Endothelial cell of umbilical vein (primary cell): ENCODE measurements at regions of chr2 and their contacts with region 1.

Region 1: DNA sequence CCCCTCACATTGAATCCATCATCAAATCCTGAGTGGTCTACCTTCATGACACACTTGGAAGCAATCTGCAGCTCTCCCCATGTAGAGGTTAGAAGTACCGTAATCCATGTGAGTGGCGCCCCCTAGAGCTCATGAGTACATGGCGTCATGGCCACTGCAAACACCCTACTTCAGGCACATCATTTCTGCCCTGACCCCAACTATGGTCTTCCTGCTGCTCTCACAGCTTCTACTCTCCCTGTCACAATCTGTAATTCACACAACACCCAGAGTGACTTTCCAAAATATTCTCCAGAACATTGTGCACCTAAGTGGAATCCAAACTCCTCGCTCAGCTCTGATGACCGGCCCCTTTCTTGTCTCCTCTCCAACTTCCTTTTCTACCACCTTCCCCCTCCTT is 141.9 kb downstream of the ANKRD44 start:
- DNase-seq: peak; percentile 73
- H3K4me3 ChIP-seq: no peak overlapping the region
- H3K27ac ChIP-seq: no peak overlapping the region
- H3K4me1 ChIP-seq: peaks cover 3% of the 10 kb centered on the region
- H3K27me3 ChIP-seq: no peaks in the 10 kb centered on the region
- CTCF ChIP-seq: peak; percentile 74 to 84
- POLR2A ChIP-seq: no peak

Region 2: DNA sequence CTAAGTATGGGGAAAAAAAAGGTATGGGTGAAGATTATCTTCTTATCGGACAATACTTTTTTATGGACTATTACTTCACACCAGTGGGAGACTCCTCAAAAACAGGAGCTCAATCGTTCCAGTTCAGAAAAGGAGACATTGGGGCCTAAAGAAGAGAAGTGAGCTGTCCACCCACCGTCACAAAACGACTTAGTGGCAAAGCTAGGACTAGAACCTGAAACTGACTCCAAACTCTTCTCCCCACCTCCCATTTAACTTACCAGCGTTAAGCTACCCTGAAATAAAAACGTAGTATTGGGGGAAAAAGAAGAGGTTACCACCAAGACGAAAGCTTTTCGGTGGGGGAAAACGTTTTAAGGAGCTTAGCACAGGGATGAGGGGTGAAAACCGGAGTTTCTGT is 369.7 kb before region 1 on chr2:
- CTCF ChIA-PET with region 1: interaction called, 5 read pairs
- POLR2A ChIA-PET with region 1: no interaction called
- dilution Hi-C with region 1: no loop called
- intact Hi-C with region 1: loop called (anchors 5 kb)
- DNase-seq: no peak
- H3K4me3 ChIP-seq: peak overlapping the region; percentile 77 to 100 (median 98)
- H3K27ac ChIP-seq: peak overlapping the region; percentile 88
- H3K4me1 ChIP-seq: peaks cover 8% of the 10 kb centered on the region
- H3K27me3 ChIP-seq: no peaks in the 10 kb centered on the region
- CTCF ChIP-seq: no peak
- POLR2A ChIP-seq: no peak

Region 3: DNA sequence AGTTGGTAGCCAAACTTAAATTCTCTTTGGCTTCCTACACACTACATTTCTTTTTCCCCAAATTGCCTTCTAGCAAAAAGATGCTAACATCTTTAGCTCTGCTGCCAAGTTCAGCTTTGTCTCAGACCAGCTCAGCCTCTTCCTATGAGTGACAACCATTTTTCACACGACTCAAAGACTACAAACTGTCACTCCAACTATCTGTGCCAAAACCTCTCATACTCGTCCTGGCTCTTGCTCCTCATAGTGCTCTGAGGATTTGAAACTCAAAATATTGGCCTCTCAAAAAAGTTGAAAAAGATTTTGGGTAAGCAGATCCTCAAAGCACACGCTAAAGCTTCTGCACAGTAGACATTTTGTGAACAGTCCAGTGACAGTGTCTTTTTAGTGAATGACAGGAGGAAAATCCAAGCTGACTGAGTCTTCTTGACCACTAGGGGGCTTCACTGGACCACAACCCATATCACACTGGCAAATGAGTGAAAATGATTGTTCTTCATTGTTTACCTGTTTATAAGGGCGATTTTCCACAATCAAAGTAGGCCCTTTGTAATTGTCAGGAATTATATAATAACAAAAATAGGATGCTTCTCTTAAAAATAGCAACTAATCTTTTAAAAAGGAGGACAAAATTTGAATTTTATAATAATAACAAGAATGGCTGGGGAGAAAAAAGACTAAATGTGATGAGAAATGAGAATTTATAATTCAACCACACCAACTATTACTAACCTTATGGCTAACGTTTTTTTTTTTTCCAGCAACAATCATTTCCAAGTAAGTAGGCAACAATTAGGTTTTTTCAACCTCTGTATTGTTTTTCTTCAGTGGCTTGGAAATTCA is 156.7 kb before region 1 on chr2:
- CTCF ChIA-PET with region 1: interaction called, 18 read pairs
- POLR2A ChIA-PET with region 1: no interaction called
- dilution Hi-C with region 1: no loop called
- intact Hi-C with region 1: loop called (anchors 1 kb)
- DNase-seq: peak; percentile 60
- H3K4me3 ChIP-seq: no peak overlapping the region
- H3K27ac ChIP-seq: no peak overlapping the region
- H3K4me1 ChIP-seq: no peaks in the 10 kb centered on the region
- H3K27me3 ChIP-seq: no peaks in the 10 kb centered on the region
- CTCF ChIP-seq: peak; percentile 75 to 78
- POLR2A ChIP-seq: no peak

Region 4: DNA sequence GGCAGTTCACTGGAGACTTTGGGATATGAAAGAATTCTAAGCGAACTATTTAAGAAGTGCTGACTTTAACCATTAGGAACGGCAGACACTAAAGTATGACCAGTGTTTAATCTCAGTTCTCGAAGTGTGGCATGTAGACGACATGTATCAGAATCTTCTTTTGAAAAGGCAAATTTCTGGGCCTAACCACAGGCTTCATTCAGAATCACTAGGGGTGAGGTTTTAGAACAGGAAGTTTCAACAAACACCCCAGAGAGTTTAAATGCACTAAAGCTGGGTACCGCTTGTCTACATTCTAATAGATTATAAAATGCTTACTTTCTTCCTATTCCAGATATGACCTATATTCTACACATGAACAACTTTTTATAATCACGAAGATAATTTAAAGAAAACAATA is 38.4 kb before region 1 on chr2:
- CTCF ChIA-PET with region 1: interaction called, 90 read pairs
- POLR2A ChIA-PET with region 1: no interaction called
- dilution Hi-C with region 1: no loop called
- intact Hi-C with region 1: no loop called
- DNase-seq: no peak
- H3K4me3 ChIP-seq: no peak overlapping the region
- H3K27ac ChIP-seq: no peak overlapping the region
- H3K4me1 ChIP-seq: no peaks in the 10 kb centered on the region
- H3K27me3 ChIP-seq: no peaks in the 10 kb centered on the region
- CTCF ChIP-seq: no peak
- POLR2A ChIP-seq: no peak

Region 5: GRCh38 chr2:197152451-197153228 is 16.1 kb before region 1 on chr2:
- CTCF ChIA-PET with region 1: interaction called, 19 read pairs
- POLR2A ChIA-PET with region 1: no interaction called
- dilution Hi-C with region 1: no loop called
- intact Hi-C with region 1: no loop called
- DNase-seq: no peak
- H3K4me3 ChIP-seq: no peak overlapping the region
- H3K27ac ChIP-seq: no peak overlapping the region
- H3K4me1 ChIP-seq: peaks cover 6% of the 10 kb centered on the region
- H3K27me3 ChIP-seq: no peaks in the 10 kb centered on the region
- CTCF ChIP-seq: no peak
- POLR2A ChIP-seq: no peak

Region 6: GRCh38 chr2:197191177-197191939 is 22.7 kb after region 1 on chr2:
- CTCF ChIA-PET with region 1: interaction called, 14 read pairs
- POLR2A ChIA-PET with region 1: no interaction called
- dilution Hi-C with region 1: no loop called
- intact Hi-C with region 1: no loop called
- DNase-seq: peak; percentile 55
- H3K4me3 ChIP-seq: no peak overlapping the region
- H3K27ac ChIP-seq: no peak overlapping the region
- H3K4me1 ChIP-seq: peaks cover 8% of the 10 kb centered on the region
- H3K27me3 ChIP-seq: peaks cover 0 to 5% of the 10 kb centered on the region in 2 experiments
- CTCF ChIP-seq: peak; percentile 36 to 37
- POLR2A ChIP-seq: no peak

Region 7: DNA sequence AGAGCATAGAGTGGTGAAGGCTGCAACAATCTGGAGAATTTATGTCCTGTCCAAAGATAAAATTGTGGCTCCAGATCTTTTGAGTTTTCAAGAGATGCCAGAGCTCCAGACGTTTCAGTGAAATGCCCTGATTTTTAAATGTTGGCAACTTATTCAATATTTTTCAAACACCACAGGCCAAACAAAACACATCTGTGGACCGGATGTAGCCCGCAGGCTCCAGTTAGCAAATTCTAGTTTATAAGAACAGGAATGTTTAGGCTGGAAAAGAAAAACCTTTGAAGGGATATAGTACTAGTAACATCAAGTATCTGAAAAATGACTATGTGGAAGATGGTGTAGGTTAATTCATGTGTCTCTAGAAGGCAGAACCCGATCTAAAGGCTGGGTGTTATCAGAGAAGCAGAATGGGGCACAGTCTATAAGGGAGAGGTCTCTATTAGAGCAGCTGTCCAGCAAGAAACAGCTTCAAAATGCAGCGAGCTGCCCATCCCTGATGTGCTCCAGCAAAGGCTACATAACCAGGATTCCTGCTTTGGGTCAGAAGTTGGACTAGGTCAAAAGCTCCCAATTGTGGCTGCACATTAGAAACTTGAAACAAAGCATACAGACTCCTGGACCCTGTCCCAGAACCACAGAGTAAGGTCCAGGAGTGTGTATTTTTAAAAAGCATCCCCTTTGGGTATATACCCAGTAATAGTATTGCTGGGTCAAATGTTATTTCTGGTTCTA is 36.0 kb after region 1 on chr2:
- CTCF ChIA-PET with region 1: no interaction called
- POLR2A ChIA-PET with region 1: no interaction called
- dilution Hi-C with region 1: no loop called
- intact Hi-C with region 1: no loop called
- DNase-seq: no peak
- H3K4me3 ChIP-seq: no peak overlapping the region
- H3K27ac ChIP-seq: no peak overlapping the region
- H3K4me1 ChIP-seq: no peaks in the 10 kb centered on the region
- H3K27me3 ChIP-seq: peaks cover 0 to 4% of the 10 kb centered on the region in 2 experiments
- CTCF ChIP-seq: no peak
- POLR2A ChIP-seq: no peak

Region 8: GRCh38 chr2:197442857-197443256 is 274.2 kb after region 1 on chr2:
- CTCF ChIA-PET with region 1: no interaction called
- POLR2A ChIA-PET with region 1: no interaction called
- dilution Hi-C with region 1: no loop called
- intact Hi-C with region 1: no loop called
- DNase-seq: no peak
- H3K4me3 ChIP-seq: no peak overlapping the region
- H3K27ac ChIP-seq: no peak overlapping the region
- H3K4me1 ChIP-seq: peaks cover 9% of the 10 kb centered on the region
- H3K27me3 ChIP-seq: no peaks in the 10 kb centered on the region
- CTCF ChIP-seq: no peak
- POLR2A ChIP-seq: no peak